ENCODE measurements at regions of chr9 and their contacts with region 1.

Region 1: DNA sequence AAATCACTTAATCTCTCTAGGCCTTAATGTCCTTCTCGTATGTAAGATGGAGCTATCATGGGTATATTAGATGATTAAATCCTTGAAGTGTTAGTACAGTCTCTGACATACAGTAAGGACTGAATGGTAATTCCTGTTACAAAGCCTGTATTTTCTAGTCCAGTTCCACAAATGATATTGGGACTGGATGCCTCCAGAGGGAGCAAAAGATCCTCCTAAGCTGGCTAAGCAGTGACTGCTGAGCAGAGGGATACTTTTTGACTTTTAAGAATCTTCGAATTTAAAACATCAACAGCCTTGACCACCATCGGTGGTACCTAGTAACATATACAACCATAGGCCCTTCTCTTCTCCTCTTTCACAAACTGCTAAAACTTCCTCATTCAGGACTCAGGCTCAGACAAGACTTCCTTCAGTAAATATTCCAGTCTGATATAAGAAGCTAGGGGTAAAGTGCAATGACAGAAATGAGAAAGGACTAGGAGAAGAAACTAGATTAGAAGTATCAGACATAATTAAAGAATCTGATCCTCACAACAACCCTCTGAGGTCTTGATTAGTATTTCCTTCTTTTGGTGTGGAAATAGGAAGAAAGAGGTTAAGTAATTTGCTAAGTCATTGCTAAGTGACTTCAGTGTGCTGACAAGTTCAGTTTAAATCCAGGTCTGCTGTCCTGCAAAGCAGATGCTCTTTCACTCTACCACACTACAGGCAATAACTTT is 13.9 kb downstream of the PTAR1 start:
- DNase-seq: no peak
- H3K4me3 ChIP-seq: no peak overlapping the region
- H3K4me3 Mint-ChIP-seq: no peak overlapping the region
- H3K27ac Mint-ChIP-seq: peak overlapping the region; percentile 37
- H3K4me1 ChIP-seq: peaks cover 14% of the 10 kb centered on the region; the same call in 1 of the 2 replicates
- H3K4me1 Mint-ChIP-seq: peaks cover 5% of the 10 kb centered on the region
- H3K27me3 ChIP-seq: no peaks in the 10 kb centered on the region
- H3K27me3 Mint-ChIP-seq: no peaks in the 10 kb centered on the region
- CTCF ChIP-seq: peak in 1 of 2 experiments; percentile 1

Region 2: DNA sequence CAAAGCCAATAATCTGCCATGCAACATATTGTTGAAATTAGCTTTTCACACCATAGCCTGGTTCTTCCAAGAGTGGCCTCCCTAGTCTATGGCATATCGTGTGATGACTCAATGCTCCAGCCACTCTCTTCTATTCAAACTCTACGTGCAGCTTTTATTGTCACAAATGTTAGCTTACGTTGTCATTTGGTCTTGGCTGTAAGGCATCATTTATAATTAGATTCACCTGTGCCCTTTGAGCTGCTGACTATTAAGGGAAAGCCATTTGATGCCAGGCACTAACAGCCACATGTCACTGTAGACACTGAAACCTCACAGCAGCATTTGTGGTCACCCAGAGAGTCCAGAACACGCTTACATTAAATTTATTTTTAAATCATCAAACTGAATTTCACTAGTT is 140.5 kb before region 1 on chr9:
- CTCF ChIA-PET with region 1: no interaction called
- POLR2A ChIA-PET with region 1: no interaction called
- intact Hi-C with region 1: no loop called
- DNase-seq: no peak
- H3K4me3 ChIP-seq: no peak overlapping the region
- H3K4me3 Mint-ChIP-seq: no peak overlapping the region
- H3K27ac Mint-ChIP-seq: no peak overlapping the region
- H3K4me1 ChIP-seq: no peaks in the 10 kb centered on the region
- H3K4me1 Mint-ChIP-seq: no peaks in the 10 kb centered on the region
- H3K27me3 ChIP-seq: no peaks in the 10 kb centered on the region
- H3K27me3 Mint-ChIP-seq: peaks cover 7% of the 10 kb centered on the region
- CTCF ChIP-seq: no peak

Region 3: GRCh38 chr9:69621730-69622460 is 124.0 kb before region 1 on chr9:
- CTCF ChIA-PET with region 1: no interaction called
- POLR2A ChIA-PET with region 1: no interaction called
- intact Hi-C with region 1: no loop called
- DNase-seq: no peak
- H3K4me3 ChIP-seq: no peak overlapping the region
- H3K4me3 Mint-ChIP-seq: no peak overlapping the region
- H3K27ac Mint-ChIP-seq: no peak overlapping the region
- H3K4me1 ChIP-seq: no peaks in the 10 kb centered on the region
- H3K4me1 Mint-ChIP-seq: no peaks in the 10 kb centered on the region
- H3K27me3 ChIP-seq: no peaks in the 10 kb centered on the region
- H3K27me3 Mint-ChIP-seq: no peaks in the 10 kb centered on the region
- CTCF ChIP-seq: no peak

Region 4: GRCh38 chr9:69759421-69760277 is 13.8 kb after region 1 on chr9 and contains the start of gene PTAR1:
- CTCF ChIA-PET with region 1: no interaction called
- POLR2A ChIA-PET with region 1: no interaction called
- intact Hi-C with region 1: loop called (anchors 1 kb)
- DNase-seq: peak; percentile 73 to 74
- H3K4me3 ChIP-seq: peak within 1 kb of the TSS; percentile 47
- H3K4me3 Mint-ChIP-seq: peak within 1 kb of the TSS; percentile 73
- H3K27ac Mint-ChIP-seq: peak within 1 kb of the TSS; percentile 69
- H3K4me1 ChIP-seq: no peaks in the 10 kb centered on the region
- H3K4me1 Mint-ChIP-seq: peaks cover 7% of the 10 kb centered on the region
- H3K27me3 ChIP-seq: no peaks in the 10 kb centered on the region
- H3K27me3 Mint-ChIP-seq: no peaks in the 10 kb centered on the region
- CTCF ChIP-seq: no peak
- total RNA-seq, gene PTAR1: 16.5 and 17.4 TPM in 2 replicates

Region 5: GRCh38 chr9:69822091-69822750 is 76.3 kb after region 1 on chr9:
- CTCF ChIA-PET with region 1: no interaction called
- POLR2A ChIA-PET with region 1: no interaction called
- intact Hi-C with region 1: loop called (anchors 5 kb)
- DNase-seq: no peak
- H3K4me3 ChIP-seq: no peak overlapping the region
- H3K4me3 Mint-ChIP-seq: no peak overlapping the region
- H3K27ac Mint-ChIP-seq: no peak overlapping the region
- H3K4me1 ChIP-seq: no peaks in the 10 kb centered on the region
- H3K4me1 Mint-ChIP-seq: no peaks in the 10 kb centered on the region
- H3K27me3 ChIP-seq: no peaks in the 10 kb centered on the region
- H3K27me3 Mint-ChIP-seq: peaks cover 4% of the 10 kb centered on the region
- CTCF ChIP-seq: peak in 1 of 2 experiments; percentile 0